Activated CD4-positive, alpha-beta T cell treated with anti-CD3 and anti-CD28 coated beads, Interleukin-2, amount 10 ng/mL, durations not matched to agents 24 days and 14 days (primary cell): ENCODE measurements at regions of chr19 and their contacts with region 1.

Region 1: DNA sequence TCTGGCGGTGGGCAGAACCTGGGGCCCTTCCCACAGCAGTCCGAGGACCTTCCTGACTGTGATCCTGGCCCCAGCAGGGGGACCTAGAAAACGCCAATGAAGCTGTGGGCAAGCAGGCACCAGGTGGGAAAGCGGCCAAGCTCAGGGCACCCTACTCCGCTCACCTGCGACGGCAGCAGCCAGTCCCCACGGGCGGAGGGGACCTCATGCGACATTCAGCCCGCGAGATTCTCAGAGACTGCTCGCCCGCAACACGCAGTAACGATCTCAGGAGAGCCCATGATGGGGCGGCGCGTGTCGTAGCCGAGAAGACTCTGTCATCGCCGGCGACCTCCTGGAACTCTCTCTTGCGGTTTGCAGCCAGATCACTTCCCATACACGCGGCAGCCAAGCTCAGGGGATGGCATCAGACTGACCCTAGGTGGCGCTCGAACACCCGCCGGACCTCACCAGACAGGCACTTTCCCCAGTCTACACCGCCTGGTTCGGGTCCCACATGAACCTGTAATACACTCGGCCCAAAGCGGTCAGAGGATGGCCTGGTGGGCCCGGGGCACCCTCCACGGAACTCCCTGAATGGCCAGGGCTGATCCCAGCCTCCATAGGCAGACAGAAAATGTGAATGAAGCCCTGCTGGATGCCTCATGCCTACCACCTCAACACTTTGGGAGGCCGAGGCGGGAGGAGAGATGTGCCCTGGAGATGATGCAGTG is 26.5 kb downstream of the MAN2B1 start:
- DNase-seq: peak; percentile 94
- H3K4me3 Mint-ChIP-seq: peak overlapping the region; percentile 61
- H3K27ac Mint-ChIP-seq: peak overlapping the region; percentile 60
- H3K4me1 Mint-ChIP-seq: peaks cover 12% of the 10 kb centered on the region
- H3K27me3 Mint-ChIP-seq: no peaks in the 10 kb centered on the region

Region 2: DNA sequence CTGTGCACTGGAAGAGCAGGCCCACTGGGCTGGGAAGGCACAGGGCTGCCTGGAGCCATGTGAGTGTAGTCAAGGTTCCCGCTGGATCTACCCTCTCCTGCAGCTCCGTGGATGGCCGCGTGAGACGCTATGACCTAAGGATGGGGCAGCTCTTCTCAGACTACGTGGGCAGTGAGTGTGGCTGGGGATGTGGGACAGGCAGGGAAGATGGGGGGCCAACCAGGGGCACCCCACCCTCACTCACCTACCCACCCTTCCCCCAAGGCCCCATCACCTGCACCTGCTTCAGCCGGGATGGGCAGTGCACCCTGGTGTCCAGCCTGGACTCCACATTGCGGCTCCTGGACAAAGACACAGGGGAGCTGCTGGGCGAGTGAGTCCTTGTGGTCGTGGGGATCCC is 32.7 kb after region 1 on chr19:
- intact Hi-C with region 1: loop called (anchors 1 kb)
- DNase-seq: no peak
- H3K4me3 Mint-ChIP-seq: no peak overlapping the region
- H3K27ac Mint-ChIP-seq: no peak overlapping the region
- H3K4me1 Mint-ChIP-seq: peaks cover 35% of the 10 kb centered on the region
- H3K27me3 Mint-ChIP-seq: no peaks in the 10 kb centered on the region